Activated CD8-positive, alpha-beta T cell treated with anti-CD3 and anti-CD28 coated beads, Interleukin-2, amount 10 ng/mL, durations not matched to agents 7 days and 5 days (primary cell): ENCODE measurements at regions of chr15 and their contacts with region 1.

Region 1: DNA sequence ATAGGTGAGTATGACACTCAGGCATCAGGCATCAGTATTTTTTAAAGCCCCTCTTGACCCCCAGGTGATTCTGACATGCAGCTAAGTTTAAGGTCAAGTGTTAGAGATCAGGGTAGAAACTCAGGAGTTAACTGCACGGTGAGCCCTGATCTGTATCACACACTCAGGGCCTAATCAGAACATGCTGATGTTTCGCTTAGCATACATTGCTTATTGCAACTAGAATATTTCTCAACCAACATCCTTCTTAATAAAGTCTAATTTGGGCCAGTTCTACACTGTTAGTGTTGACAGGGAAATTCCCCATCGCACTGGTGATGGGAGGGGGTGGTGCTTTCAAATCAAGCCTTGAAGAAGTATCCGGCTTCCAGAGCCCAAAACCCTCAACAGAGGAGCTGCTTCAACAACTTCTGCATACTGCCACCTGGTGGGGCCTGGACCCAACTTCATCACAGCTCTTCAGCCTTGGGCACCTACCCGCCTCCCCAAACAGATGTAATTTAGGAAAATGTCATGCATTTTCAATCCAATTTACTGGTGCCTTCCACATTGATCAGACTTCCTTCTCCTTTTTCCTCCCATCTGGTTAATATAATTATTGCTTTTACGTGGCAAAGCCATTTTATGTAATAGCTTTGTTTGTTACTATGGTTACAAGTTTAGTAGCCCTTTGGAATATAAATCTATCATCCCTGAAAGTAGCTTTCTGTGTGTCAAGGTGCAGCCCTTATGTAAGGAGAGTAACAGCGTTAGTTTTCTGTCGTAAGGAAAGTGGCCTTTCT is 312.2 kb downstream of the RORA start:
- DNase-seq: peak; percentile 88
- ATAC-seq: peak; percentile 97
- H3K4me3 Mint-ChIP-seq: no peak overlapping the region
- H3K27ac Mint-ChIP-seq: no peak overlapping the region
- H3K4me1 Mint-ChIP-seq: peaks cover 8% of the 10 kb centered on the region
- H3K27me3 Mint-ChIP-seq: no peaks in the 10 kb centered on the region

Region 2: GRCh38 chr15:60478566-60479360 is 438.1 kb before region 1 on chr15 and contains the start of gene ICE2:
- CTCF ChIA-PET with region 1: interaction called, 10 read pairs
- POLR2A ChIA-PET with region 1: no interaction called
- DNase-seq: peak; percentile 98
- ATAC-seq: peak; percentile 87
- H3K4me3 Mint-ChIP-seq: peak within 1 kb of the TSS; percentile 89
- H3K27ac Mint-ChIP-seq: peak within 1 kb of the TSS; percentile 98
- H3K4me1 Mint-ChIP-seq: peaks cover 66% of the 10 kb centered on the region
- H3K27me3 Mint-ChIP-seq: no peaks in the 10 kb centered on the region
- total RNA-seq, gene ICE2: 71.4 to 76.3 TPM

Region 3: DNA sequence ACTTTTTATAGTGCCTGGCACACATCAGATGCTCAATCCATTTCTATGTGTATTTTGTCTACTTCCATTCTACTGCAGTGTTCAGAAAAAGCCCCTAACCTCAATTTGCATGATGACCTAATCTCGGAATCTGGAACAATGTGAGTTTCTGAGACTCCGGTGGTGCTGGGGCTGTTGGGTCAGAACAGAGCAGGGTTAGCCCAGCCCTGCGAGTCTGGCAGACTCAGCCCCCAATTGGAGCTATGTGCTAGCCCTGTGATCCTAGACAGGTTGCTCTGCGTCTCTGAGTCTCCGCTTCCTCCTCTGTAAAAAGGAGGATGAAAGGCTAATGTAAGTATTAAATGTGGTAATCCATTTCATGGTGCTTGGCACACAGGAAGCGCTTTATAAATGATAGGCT is 342.9 kb before region 1 on chr15:
- CTCF ChIA-PET with region 1: interaction called, 13 read pairs
- POLR2A ChIA-PET with region 1: no interaction called
- DNase-seq: no peak
- ATAC-seq: peak; percentile 55
- H3K4me3 Mint-ChIP-seq: peak overlapping the region; percentile 42
- H3K27ac Mint-ChIP-seq: peak overlapping the region; percentile 72
- H3K4me1 Mint-ChIP-seq: peaks cover 84% of the 10 kb centered on the region
- H3K27me3 Mint-ChIP-seq: no peaks in the 10 kb centered on the region

Region 4: GRCh38 chr15:60649845-60650548 is 266.9 kb before region 1 on chr15:
- CTCF ChIA-PET with region 1: interaction called, 18 read pairs
- POLR2A ChIA-PET with region 1: interaction called, 3 read pairs
- DNase-seq: peak; percentile 66
- ATAC-seq: peak; percentile 85
- H3K4me3 Mint-ChIP-seq: peak overlapping the region; percentile 70
- H3K27ac Mint-ChIP-seq: peak overlapping the region; percentile 74
- H3K4me1 Mint-ChIP-seq: peaks cover 41% of the 10 kb centered on the region
- H3K27me3 Mint-ChIP-seq: no peaks in the 10 kb centered on the region

Region 5: GRCh38 chr15:60713119-60714084 is 203.5 kb before region 1 on chr15:
- CTCF ChIA-PET with region 1: no interaction called
- POLR2A ChIA-PET with region 1: no interaction called
- DNase-seq: no peak
- ATAC-seq: no peak
- H3K4me3 Mint-ChIP-seq: no peak overlapping the region
- H3K27ac Mint-ChIP-seq: no peak overlapping the region
- H3K4me1 Mint-ChIP-seq: no peaks in the 10 kb centered on the region
- H3K27me3 Mint-ChIP-seq: no peaks in the 10 kb centered on the region

Region 6: DNA sequence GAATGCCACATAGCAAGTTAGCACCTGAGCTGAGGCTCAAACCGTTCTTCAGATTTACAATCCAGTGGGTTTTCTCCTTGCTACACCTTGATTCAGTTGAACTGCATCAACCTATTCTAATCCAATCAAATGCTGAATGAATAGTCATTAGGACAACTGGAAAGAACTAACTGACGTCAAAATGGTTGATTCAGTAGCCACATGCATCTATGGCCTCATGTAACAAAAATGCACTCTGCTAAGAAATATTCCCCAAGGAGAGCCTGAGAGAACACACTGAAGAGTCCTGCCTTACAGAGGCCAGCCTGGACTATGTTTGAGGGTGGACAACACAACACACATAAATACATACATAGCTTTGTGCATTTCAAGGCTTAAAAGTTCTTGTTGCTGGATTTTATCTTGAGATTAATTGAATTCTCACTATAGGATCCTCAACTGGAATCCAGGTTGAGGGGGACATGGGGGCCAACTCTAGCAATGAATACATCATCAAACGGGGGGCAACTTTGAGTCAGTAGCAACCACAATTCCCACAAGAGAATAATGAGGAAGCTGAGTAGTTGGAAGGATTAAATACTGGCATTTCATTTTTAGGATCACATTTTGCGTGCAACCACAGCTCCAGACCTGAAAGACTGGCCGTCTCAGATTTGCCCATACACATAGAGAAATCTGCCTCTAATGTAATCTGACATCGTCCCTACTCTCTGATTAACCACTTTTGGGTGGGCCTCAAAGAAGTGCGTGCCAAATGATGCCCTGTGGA is 157.7 kb before region 1 on chr15:
- CTCF ChIA-PET with region 1: no interaction called
- POLR2A ChIA-PET with region 1: no interaction called
- DNase-seq: no peak
- ATAC-seq: no peak
- H3K4me3 Mint-ChIP-seq: no peak overlapping the region
- H3K27ac Mint-ChIP-seq: no peak overlapping the region
- H3K4me1 Mint-ChIP-seq: no peaks in the 10 kb centered on the region
- H3K27me3 Mint-ChIP-seq: peaks cover 2% of the 10 kb centered on the region

Region 7: GRCh38 chr15:60840306-60840702 is 76.6 kb before region 1 on chr15:
- CTCF ChIA-PET with region 1: interaction called, 15 read pairs
- POLR2A ChIA-PET with region 1: no interaction called
- DNase-seq: no peak
- ATAC-seq: no peak
- H3K4me3 Mint-ChIP-seq: peak overlapping the region; percentile 72
- H3K27ac Mint-ChIP-seq: peak overlapping the region; percentile 94
- H3K4me1 Mint-ChIP-seq: peaks cover 61% of the 10 kb centered on the region
- H3K27me3 Mint-ChIP-seq: peaks cover 30% of the 10 kb centered on the region